PC-3 (cell line): ENCODE measurements at regions of chr20 and their contacts with region 1.

Region 1: GRCh38 chr20:2713285-2713684 is 20.7 kb downstream of the EBF4 start:
- DNase-seq: peak; percentile 46
- ATAC-seq: peak; percentile 64
- H3K4me3 ChIP-seq: no peak overlapping the region
- H3K27ac ChIP-seq: no peak overlapping the region
- H3K4me1 ChIP-seq: no peaks in the 10 kb centered on the region
- H3K27me3 ChIP-seq: peaks cover 38% of the 10 kb centered on the region
- CTCF ChIP-seq: peak; percentile 65

Region 2: GRCh38 chr20:2742934-2743559 is 29.8 kb after region 1 on chr20:
- CTCF ChIA-PET with region 1: no interaction called
- POLR2A ChIA-PET with region 1: no interaction called
- intact Hi-C with region 1: loop called (anchors 1 kb)
- DNase-seq: peak; percentile 86
- ATAC-seq: peak; percentile 78
- H3K4me3 ChIP-seq: no peak overlapping the region; the same call in 1 of the 2 replicates
- H3K27ac ChIP-seq: no peak overlapping the region
- H3K4me1 ChIP-seq: 0 out of 2 replicates have a peak, but pooled peaks cover 5% of the 10 kb centered on the region
- H3K27me3 ChIP-seq: no peaks in the 10 kb centered on the region; the same call in 1 of the 2 replicates
- CTCF ChIP-seq: peak; percentile 98

Region 3: DNA sequence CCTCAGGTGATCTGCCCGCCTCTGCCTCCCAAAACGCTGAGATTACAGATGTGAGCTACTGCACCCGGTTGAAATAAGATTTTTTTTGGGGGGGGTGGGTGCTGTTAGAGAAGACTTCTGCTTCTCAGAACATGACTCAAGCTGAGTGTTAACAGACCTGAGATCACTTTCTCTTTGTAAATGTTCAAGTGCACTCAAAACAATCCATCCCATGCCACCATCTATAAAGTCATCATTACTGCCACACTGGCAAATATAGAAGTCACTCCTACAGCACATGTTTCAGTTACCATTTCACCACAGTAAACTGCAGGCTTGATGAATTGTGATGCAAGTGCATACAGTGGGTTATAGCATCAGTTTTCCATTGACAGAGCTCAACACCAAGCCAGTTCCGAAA is 136.2 kb after region 1 on chr20:
- CTCF ChIA-PET with region 1: interaction called, 3 read pairs
- POLR2A ChIA-PET with region 1: no interaction called
- intact Hi-C with region 1: loop called (anchors 2 kb)
- DNase-seq: no peak
- ATAC-seq: no peak
- H3K4me3 ChIP-seq: no peak overlapping the region
- H3K27ac ChIP-seq: no peak overlapping the region
- H3K4me1 ChIP-seq: no peaks in the 10 kb centered on the region
- H3K27me3 ChIP-seq: no peaks in the 10 kb centered on the region
- CTCF ChIP-seq: no peak